Posterior cingulate gyrus (tissue), 11 donors: ENCODE measurements at regions of chr17 and their contacts with region 1.

Region 1: GRCh38 chr17:77734341-77735080 is 224.0 kb upstream of the TNRC6C start:
- DNase-seq: peak; percentile 73 to 98 (median 90)

Region 2: DNA sequence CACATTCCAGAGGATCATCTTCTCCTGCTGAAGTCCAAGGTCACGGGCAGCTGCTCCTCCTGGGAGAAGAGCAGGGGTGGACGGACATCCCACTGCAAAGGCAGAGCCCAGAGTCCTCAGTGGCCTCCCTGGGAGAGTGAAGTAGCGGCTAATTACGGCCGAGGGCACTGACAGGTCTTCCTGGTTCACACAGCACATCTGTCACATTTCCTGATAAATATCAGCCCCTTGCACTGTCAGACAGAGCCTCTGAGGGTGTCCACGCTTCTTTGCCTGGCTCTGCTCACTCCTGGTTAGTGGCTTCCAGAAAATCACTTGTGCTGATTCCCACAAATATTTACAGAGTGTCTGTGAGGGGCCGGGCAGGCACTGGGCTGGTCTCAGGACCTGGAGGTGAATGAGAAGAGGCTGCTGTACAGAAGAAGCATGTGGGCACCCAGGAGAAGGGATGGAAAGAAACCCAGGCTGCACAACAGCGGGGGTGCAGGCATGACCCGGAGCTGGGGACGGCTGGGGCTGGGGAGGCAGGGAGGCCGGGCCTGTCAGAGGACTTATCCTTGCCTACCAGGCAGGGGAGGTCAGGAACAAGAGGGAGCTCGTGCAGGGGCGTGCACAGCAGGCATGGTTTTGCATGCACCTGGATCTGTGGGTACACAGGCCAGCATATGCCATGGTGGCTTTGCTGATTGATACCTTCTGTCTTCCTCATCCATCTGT is 34.2 kb before region 1 on chr17:
- intact Hi-C with region 1: no loop called
- DNase-seq: peak in 1 of 10 donors; percentile 35

Region 3: GRCh38 chr17:77778636-77779489 is 44.4 kb after region 1 on chr17:
- intact Hi-C with region 1: loop called (anchors 1 kb)
- DNase-seq: peak; percentile 80 to 99 (median 89)

Region 4: DNA sequence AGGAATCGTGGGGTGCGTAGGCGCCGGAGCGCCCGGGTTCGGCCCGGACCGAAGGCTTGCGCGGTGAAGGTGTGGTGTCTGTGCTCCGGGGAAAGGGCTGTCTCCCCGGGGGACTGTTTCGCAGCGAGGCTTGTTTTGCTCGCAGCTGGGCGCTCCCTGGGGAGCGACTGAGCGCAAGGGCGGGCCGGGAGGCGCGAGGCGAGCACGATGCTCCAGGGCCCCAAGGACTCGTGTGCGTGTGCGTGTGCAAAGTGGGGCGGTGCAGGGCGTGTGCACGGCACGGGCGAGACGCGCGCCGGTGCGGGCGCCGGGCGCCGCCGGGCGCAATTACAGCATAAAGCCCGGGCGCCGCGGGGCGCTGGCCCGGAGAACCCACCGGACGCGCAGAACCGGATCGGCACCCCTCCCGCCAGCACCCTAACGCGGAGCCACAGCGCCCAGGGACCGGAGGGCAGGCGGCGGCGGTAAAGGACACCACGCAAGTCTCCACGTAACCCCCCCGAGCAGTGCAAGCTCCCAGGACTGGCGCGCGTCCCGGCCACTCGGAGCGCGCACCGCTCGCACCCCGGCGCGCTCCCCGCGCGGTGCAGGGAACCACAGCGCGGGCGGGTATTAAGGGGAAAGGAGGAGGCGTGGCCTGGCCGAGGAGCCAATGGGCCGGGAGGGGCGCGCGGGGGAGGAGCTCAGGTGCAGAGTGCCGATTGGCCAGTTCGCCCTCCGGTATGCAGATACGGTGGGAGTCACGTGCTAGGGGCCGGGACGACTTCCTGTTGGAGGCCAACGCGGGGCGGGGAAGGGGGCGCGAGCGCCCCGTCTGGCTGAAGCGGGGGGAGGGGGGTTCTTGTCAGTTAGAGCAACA is 223.6 kb after region 1 on chr17 and contains the start of gene TNRC6C:
- intact Hi-C with region 1: loop called (anchors 10 kb)
- DNase-seq: peak; percentile 99 to 100 (median 100)